Activated CD4-positive, alpha-beta T cell treated with anti-CD3 and anti-CD28 coated beads, Interleukin-2, amount 10 ng/mL, durations not matched to agents 24 days and 14 days (primary cell): ENCODE measurements at regions of chr7 and their contacts with region 1.

Region 1: GRCh38 chr7:7257899-7258692 is 75.8 kb downstream of the C1GALT1 start:
- DNase-seq: peak; percentile 67
- H3K4me3 Mint-ChIP-seq: peak overlapping the region; percentile 72
- H3K27ac Mint-ChIP-seq: peak overlapping the region; percentile 83
- H3K4me1 Mint-ChIP-seq: peaks cover 31% of the 10 kb centered on the region
- H3K27me3 Mint-ChIP-seq: no peaks in the 10 kb centered on the region

Region 2: GRCh38 chr7:6637544-6638229 is 620.4 kb before region 1 on chr7:
- intact Hi-C with region 1: no loop called
- DNase-seq: peak; percentile 86
- H3K4me3 Mint-ChIP-seq: peak overlapping the region; percentile 92
- H3K27ac Mint-ChIP-seq: peak overlapping the region; percentile 84
- H3K4me1 Mint-ChIP-seq: peaks cover 25% of the 10 kb centered on the region
- H3K27me3 Mint-ChIP-seq: no peaks in the 10 kb centered on the region

Region 3: GRCh38 chr7:7190142-7190541 is 68.0 kb before region 1 on chr7:
- intact Hi-C with region 1: no loop called
- DNase-seq: no peak
- H3K4me3 Mint-ChIP-seq: no peak overlapping the region
- H3K27ac Mint-ChIP-seq: no peak overlapping the region
- H3K4me1 Mint-ChIP-seq: peaks cover 37% of the 10 kb centered on the region
- H3K27me3 Mint-ChIP-seq: no peaks in the 10 kb centered on the region

Region 4: GRCh38 chr7:7221602-7222038 is 36.5 kb before region 1 on chr7:
- intact Hi-C with region 1: loop called (anchors 1 kb)
- DNase-seq: no peak
- H3K4me3 Mint-ChIP-seq: no peak overlapping the region
- H3K27ac Mint-ChIP-seq: no peak overlapping the region
- H3K4me1 Mint-ChIP-seq: peaks cover 21% of the 10 kb centered on the region
- H3K27me3 Mint-ChIP-seq: no peaks in the 10 kb centered on the region

Region 5: DNA sequence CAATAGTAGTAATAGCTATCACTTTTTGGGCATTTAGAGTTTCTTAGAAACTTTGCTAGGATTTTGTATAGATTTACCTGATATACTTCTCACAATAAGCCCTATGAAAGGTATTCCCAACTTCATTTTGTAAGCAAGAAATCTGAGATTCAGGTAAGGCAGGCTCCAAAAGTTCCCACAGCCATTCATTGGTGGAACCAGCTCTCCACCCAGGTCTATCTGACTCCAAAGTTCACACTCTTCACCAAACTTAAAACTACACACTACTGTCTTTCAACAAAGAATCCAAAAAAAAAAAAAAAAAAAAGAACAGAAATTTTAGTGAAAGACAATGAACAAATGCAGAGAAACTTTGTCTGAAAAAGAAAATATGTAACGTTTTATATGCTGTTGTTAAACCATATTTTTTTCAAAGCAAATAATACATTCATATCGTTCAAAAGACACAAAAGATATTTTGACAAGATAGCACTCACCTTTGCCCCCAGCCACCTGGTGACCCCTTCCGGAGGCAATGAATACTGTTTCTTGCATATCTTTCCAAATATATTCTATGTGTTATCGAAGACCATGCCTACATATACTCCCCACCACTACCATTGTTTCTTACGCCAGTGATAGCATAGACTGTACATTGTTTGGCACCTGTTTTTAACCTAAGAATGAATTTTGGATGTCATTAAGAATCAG is 32.5 kb after region 1 on chr7:
- intact Hi-C with region 1: no loop called
- DNase-seq: no peak
- H3K4me3 Mint-ChIP-seq: no peak overlapping the region
- H3K27ac Mint-ChIP-seq: no peak overlapping the region
- H3K4me1 Mint-ChIP-seq: no peaks in the 10 kb centered on the region
- H3K27me3 Mint-ChIP-seq: no peaks in the 10 kb centered on the region